Activated B cell treated with CpG ODN at 0.5 μM for 24 hours (primary cell): ENCODE measurements at regions of chr19 and their contacts with region 1.

Region 1: GRCh38 chr19:17235618-17236377 is 9.8 kb downstream of the OCEL1 start:
- DNase-seq: peak; percentile 66
- ATAC-seq: peak; percentile 90
- H3K4me3 Mint-ChIP-seq: peak overlapping the region; percentile 82
- H3K27ac Mint-ChIP-seq: no peak overlapping the region
- H3K4me1 Mint-ChIP-seq: peaks cover 9% of the 10 kb centered on the region
- H3K27me3 Mint-ChIP-seq: no peaks in the 10 kb centered on the region
- CTCF ChIP-seq: no peak

Region 2: GRCh38 chr19:17170538-17171297 is 65.1 kb before region 1 on chr19:
- CTCF ChIA-PET with region 1: interaction called, 4 read pairs
- POLR2A ChIA-PET with region 1: interaction called, 5 read pairs
- intact Hi-C with region 1: loop called (anchors 2 kb)
- DNase-seq: no peak
- ATAC-seq: peak; percentile 89
- H3K4me3 Mint-ChIP-seq: peak overlapping the region; percentile 56
- H3K27ac Mint-ChIP-seq: peak overlapping the region; percentile 89
- H3K4me1 Mint-ChIP-seq: peaks cover 16% of the 10 kb centered on the region
- H3K27me3 Mint-ChIP-seq: no peaks in the 10 kb centered on the region
- CTCF ChIP-seq: no peak

Region 3: GRCh38 chr19:17183858-17184321 is 51.9 kb before region 1 on chr19:
- CTCF ChIA-PET with region 1: interaction called, 4 read pairs
- POLR2A ChIA-PET with region 1: interaction called, 10 read pairs
- intact Hi-C with region 1: no loop called
- DNase-seq: peak; percentile 42
- ATAC-seq: peak; percentile 85
- H3K4me3 Mint-ChIP-seq: peak overlapping the region; percentile 79
- H3K27ac Mint-ChIP-seq: peak overlapping the region; percentile 99
- H3K4me1 Mint-ChIP-seq: peaks cover 32% of the 10 kb centered on the region
- H3K27me3 Mint-ChIP-seq: no peaks in the 10 kb centered on the region
- CTCF ChIP-seq: no peak

Region 4: DNA sequence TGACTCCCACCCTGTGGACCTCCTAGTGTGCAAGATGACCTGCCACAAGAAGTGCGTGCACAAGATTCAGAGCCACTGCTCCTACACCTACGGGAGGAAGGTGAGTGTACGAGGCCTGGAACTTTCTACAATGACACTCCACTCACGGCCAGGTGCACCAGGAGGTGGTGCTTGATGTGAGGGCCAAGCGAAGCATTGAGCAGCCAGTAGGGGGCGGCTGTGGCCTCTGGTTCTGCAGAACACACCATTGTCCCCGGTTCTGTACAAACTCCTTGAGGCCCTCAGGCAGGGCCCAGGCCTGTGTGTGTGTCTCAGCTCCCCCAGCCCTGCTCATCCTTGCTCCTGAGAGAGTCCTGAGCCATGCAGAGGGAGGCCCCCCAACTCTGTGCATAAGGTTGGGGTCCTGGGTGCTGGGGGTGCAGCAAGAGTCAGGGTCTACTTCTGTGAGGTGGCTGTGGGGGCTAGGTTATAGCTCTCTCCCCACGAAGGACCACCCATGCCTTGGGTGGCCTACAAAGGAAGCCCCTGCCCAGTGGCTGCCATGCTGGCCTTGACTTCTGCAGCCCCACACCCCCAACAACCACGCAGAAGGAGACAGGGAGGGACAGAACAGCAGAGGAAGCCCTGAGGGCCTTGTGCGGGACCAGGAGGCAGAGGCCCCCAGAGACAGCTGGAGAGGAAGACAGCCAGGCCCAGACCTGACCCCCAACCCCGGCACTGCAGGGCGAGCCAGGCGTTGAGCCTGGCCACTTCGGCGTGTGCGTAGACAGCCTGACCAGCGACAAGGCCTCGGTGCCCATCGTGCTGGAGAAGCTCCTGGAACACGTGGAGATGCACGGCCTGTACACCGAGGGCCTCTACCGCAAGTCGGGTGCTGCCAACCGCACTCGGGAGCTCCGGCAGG is 30.3 kb before region 1 on chr19:
- CTCF ChIA-PET with region 1: interaction called, 3 read pairs
- POLR2A ChIA-PET with region 1: no interaction called
- intact Hi-C with region 1: loop called (anchors 1 kb)
- DNase-seq: peak; percentile 48
- ATAC-seq: peak; percentile 72
- H3K4me3 Mint-ChIP-seq: no peak overlapping the region
- H3K27ac Mint-ChIP-seq: no peak overlapping the region
- H3K4me1 Mint-ChIP-seq: peaks cover 15% of the 10 kb centered on the region
- H3K27me3 Mint-ChIP-seq: no peaks in the 10 kb centered on the region
- CTCF ChIP-seq: no peak

Region 5: GRCh38 chr19:17215125-17215971 is 20.4 kb before region 1 on chr19 and contains the start of gene USE1:
- CTCF ChIA-PET with region 1: interaction called, 9 read pairs
- POLR2A ChIA-PET with region 1: interaction called, 25 read pairs
- intact Hi-C with region 1: loop called (anchors 2 kb)
- DNase-seq: peak; percentile 73
- ATAC-seq: peak; percentile 92
- H3K4me3 Mint-ChIP-seq: peak within 1 kb of the TSS; percentile 91
- H3K27ac Mint-ChIP-seq: peak within 1 kb of the TSS; percentile 96
- H3K4me1 Mint-ChIP-seq: peaks cover 19% of the 10 kb centered on the region
- H3K27me3 Mint-ChIP-seq: no peaks in the 10 kb centered on the region
- CTCF ChIP-seq: no peak
- total RNA-seq, gene USE1: 41.9 and 43.4 TPM in 2 replicates

Region 6: DNA sequence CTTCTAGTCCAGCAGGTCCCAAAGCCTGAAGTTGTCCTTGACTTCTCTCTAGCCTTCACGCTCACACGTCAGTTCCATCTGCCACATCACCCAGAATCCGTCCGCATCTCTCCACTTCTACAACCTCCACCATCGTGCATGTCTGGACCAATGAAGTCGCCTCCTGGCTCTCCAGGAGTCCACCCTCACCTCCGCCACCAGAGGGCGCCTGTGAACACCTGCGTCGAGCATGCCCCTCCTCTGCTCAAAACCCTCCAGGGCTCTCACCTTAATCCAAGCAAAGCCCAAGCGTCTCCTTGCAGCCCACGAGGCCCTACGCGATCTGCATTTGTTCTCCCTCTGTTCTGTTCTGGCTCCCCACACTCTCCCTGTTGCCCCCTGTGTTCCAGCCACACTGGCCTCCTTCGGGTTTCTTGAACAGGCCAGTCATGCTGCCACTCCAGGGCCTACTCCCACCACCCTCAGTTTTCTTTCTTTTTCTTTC is 25.1 kb after region 1 on chr19:
- CTCF ChIA-PET with region 1: interaction called, 10 read pairs
- POLR2A ChIA-PET with region 1: no interaction called
- intact Hi-C with region 1: loop called (anchors 2 kb)
- DNase-seq: peak; percentile 83
- ATAC-seq: peak; percentile 100
- H3K4me3 Mint-ChIP-seq: no peak overlapping the region
- H3K27ac Mint-ChIP-seq: no peak overlapping the region
- H3K4me1 Mint-ChIP-seq: peaks cover 11% of the 10 kb centered on the region
- H3K27me3 Mint-ChIP-seq: no peaks in the 10 kb centered on the region
- CTCF ChIP-seq: peak; percentile 74